Psoas muscle (tissue), 8 donors: ENCODE measurements at regions of chr9 and their contacts with region 1.

Region 1: DNA sequence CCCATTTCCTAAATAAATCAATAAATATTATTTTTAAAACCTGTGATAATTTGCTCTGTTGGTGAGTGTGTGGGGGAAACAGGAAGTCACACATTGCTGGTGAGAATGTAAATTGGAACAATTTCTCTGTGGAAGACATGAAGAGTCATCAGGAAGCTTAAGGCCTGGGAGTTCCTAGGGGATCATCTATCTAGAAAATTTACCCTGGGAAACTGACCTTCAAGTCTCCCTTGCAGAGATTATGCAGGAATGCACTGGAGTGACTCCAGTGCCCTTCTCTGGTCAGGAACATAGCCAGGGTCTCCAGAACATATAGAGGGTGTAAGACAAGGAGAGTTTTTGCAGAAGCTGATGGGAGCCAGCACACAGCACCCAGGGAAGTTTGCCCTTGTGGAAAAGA is 13.0 kb upstream of the GCNT1 start:
- DNase-seq: no peak
- ATAC-seq: no peak
- H3K4me3 ChIP-seq: no peak overlapping the region
- H3K27ac ChIP-seq: no peak overlapping the region
- H3K4me1 ChIP-seq: no peaks in the 10 kb centered on the region
- H3K27me3 ChIP-seq: no peaks in the 10 kb centered on the region
- CTCF ChIP-seq: no peak

Region 2: DNA sequence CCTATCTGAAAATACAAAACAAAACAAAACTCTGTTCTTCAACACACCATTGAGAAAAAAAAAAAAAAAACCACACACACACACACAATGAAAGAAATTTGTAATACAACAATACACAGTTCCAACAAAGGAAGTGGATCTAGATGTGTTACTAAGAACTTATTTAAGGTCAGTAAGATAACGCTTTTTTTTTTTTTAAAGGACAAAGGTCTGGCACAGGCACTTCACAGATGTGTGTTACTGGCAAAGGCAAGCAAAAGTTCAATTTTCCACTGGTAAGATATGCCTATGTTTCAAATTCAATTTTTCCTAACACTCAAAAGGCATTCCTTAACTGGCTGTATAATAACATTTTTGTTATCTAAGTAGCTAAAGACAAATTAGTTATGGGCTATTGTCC is 55.3 kb before region 1 on chr9:
- intact Hi-C with region 1: no loop called
- DNase-seq: no peak
- ATAC-seq: no peak
- H3K4me3 ChIP-seq: no peak overlapping the region
- H3K27ac ChIP-seq: no peak overlapping the region
- H3K4me1 ChIP-seq: peaks cover 4% of the 10 kb centered on the region
- H3K27me3 ChIP-seq: no peaks in the 10 kb centered on the region
- CTCF ChIP-seq: no peak

Region 3: GRCh38 chr9:76610011-76610352 is 164.0 kb after region 1 on chr9:
- intact Hi-C with region 1: no loop called
- DNase-seq: peak; percentile 82 to 85
- ATAC-seq: peak; percentile 28 to 85 (median 78)
- H3K4me3 ChIP-seq: no peak overlapping the region
- H3K27ac ChIP-seq: no peak overlapping the region
- H3K4me1 ChIP-seq: no peaks in the 10 kb centered on the region
- H3K27me3 ChIP-seq: no peaks in the 10 kb centered on the region
- CTCF ChIP-seq: no peak

Region 4: GRCh38 chr9:76658535-76659231 is 212.7 kb after region 1 on chr9:
- intact Hi-C with region 1: loop called in 1 of 2 experiments (anchors 5 kb)
- DNase-seq: no peak
- ATAC-seq: peak in 1 of 4 donors; percentile 45
- H3K4me3 ChIP-seq: no peak overlapping the region
- H3K27ac ChIP-seq: no peak overlapping the region
- H3K4me1 ChIP-seq: no peaks in the 10 kb centered on the region
- H3K27me3 ChIP-seq: no peaks in the 10 kb centered on the region
- CTCF ChIP-seq: peak; percentile 35